ENCODE measurements at regions of chr1 and their contacts with region 1.

Region 1: DNA sequence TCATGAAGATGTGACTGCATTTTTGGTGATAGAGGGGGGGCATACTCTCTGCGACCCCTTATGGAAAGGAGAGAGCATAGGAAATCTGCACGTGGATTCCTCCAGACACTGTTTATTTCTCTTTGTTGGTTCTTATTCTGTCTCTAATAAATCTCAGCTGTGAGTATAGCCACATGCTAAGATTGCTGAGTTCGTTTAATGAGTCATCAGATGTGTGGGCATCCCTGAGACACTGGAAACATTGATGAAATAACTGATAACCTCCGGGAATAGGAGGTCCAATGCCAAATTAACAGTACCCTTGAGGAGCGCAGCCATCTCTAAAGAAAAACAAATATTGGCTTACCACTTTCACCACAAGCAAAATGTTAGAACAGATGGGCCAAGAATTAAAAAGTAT is 880.2 kb upstream of the NEGR1 start:
- DNase-seq: no peak
- ATAC-seq: no peak
- H3K4me3 ChIP-seq: no peak overlapping the region
- H3K27ac ChIP-seq: no peak overlapping the region
- H3K4me1 ChIP-seq: no peaks in the 10 kb centered on the region
- H3K27me3 ChIP-seq: no peaks in the 10 kb centered on the region; a peak in 1 of 5 replicates
- CTCF ChIP-seq: no peak
- EP300 ChIP-seq: no peak
- POLR2A ChIP-seq: no peak
- RAD21 ChIP-seq: no peak

Region 2: GRCh38 chr1:73491634-73492033 is 329.1 kb after region 1 on chr1:
- CTCF ChIA-PET with region 1: no interaction called
- POLR2A ChIA-PET with region 1: no interaction called
- in situ Hi-C with region 1: no loop called
- intact Hi-C with region 1: loop called (anchors 5 kb)
- DNase-seq: no peak
- ATAC-seq: no peak
- H3K4me3 ChIP-seq: no peak overlapping the region
- H3K27ac ChIP-seq: no peak overlapping the region
- H3K4me1 ChIP-seq: no peaks in the 10 kb centered on the region
- H3K27me3 ChIP-seq: no peaks in the 10 kb centered on the region
- CTCF ChIP-seq: no peak
- EP300 ChIP-seq: no peak
- POLR2A ChIP-seq: no peak
- RAD21 ChIP-seq: no peak

Measured in HepG2 (cell line).